ENCODE measurements at regions of chr14 and their contacts with region 1.

Region 1: GRCh38 chr14:34875031-34875922 is at the start of gene BAZ1A:
- DNase-seq: peak; percentile 63
- ATAC-seq: peak; percentile 12
- H3K4me3 Mint-ChIP-seq: peak within 1 kb of the TSS; percentile 100
- H3K27ac Mint-ChIP-seq: peak within 1 kb of the TSS; percentile 99
- H3K4me1 Mint-ChIP-seq: peaks cover 35% of the 10 kb centered on the region
- H3K27me3 Mint-ChIP-seq: no peaks in the 10 kb centered on the region
- CTCF ChIP-seq: no peak
- total RNA-seq, gene BAZ1A: 45.3 and 55.9 TPM in 2 replicates

Region 2: GRCh38 chr14:34461334-34462131 is 413.7 kb before region 1 on chr14:
- CTCF ChIA-PET with region 1: no interaction called
- POLR2A ChIA-PET with region 1: no interaction called
- intact Hi-C with region 1: loop called (anchors 5 kb)
- DNase-seq: no peak
- ATAC-seq: no peak
- H3K4me3 Mint-ChIP-seq: peak overlapping the region; percentile 88
- H3K27ac Mint-ChIP-seq: peak overlapping the region; percentile 76
- H3K4me1 Mint-ChIP-seq: peaks cover 15% of the 10 kb centered on the region
- H3K27me3 Mint-ChIP-seq: no peaks in the 10 kb centered on the region
- CTCF ChIP-seq: no peak

Region 3: GRCh38 chr14:34629657-34630529 is 245.4 kb before region 1 on chr14 and contains the start of gene SNX6:
- CTCF ChIA-PET with region 1: no interaction called
- POLR2A ChIA-PET with region 1: interaction called, 6 read pairs
- intact Hi-C with region 1: loop called (anchors 1 kb)
- DNase-seq: peak; percentile 77
- ATAC-seq: peak; percentile 98
- H3K4me3 Mint-ChIP-seq: peak within 1 kb of the TSS; percentile 97
- H3K27ac Mint-ChIP-seq: peak within 1 kb of the TSS; percentile 93
- H3K4me1 Mint-ChIP-seq: peaks cover 10% of the 10 kb centered on the region
- H3K27me3 Mint-ChIP-seq: peaks cover 3% of the 10 kb centered on the region
- CTCF ChIP-seq: no peak
- total RNA-seq, gene SNX6: 56.0 and 61.0 TPM in 2 replicates

Region 4: DNA sequence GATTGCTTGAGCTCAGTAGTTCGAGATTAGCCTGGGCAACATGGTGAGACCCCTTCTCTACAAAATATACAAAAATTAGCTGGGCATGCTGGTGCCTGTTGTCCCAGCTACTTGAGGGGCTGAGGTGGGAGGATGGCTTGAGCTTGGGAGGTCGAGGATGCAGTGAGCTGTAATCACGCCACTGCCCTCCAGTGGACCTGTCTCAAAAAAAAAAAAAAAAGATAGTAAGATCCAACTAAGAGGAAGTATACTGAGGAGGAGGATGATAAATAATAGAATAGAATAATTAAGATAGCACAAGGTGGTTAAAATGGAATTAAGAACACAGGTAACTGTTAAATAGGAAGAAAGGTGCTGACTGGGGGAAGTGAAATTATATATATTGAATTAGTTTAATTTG is 36.9 kb after region 1 on chr14:
- CTCF ChIA-PET with region 1: no interaction called
- POLR2A ChIA-PET with region 1: interaction called, 4 read pairs
- intact Hi-C with region 1: loop called (anchors 2 kb)
- DNase-seq: no peak
- ATAC-seq: no peak
- H3K4me3 Mint-ChIP-seq: no peak overlapping the region
- H3K27ac Mint-ChIP-seq: no peak overlapping the region
- H3K4me1 Mint-ChIP-seq: peaks cover 12% of the 10 kb centered on the region
- H3K27me3 Mint-ChIP-seq: no peaks in the 10 kb centered on the region
- CTCF ChIP-seq: no peak

Region 5: DNA sequence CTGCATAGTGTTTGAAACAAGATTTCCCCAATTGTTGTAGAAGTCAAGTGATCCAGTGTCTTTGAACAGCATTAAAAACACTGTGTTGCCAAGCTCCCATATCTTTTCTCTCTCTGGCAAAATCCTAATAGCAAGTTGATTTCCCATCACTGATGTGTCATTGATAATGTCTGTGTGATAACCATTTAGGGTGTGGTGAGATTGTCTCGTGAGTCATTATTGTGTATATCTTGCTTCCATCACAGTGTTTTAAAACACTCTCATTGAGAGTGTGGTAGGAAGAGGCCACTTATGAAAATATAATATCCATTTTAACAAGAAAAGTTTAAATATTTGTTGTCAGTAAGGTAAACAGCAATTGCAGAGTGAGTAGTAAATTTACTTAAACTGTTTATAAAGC is 321.7 kb after region 1 on chr14:
- CTCF ChIA-PET with region 1: no interaction called
- POLR2A ChIA-PET with region 1: no interaction called
- intact Hi-C with region 1: no loop called
- DNase-seq: no peak
- ATAC-seq: no peak
- H3K4me3 Mint-ChIP-seq: no peak overlapping the region
- H3K27ac Mint-ChIP-seq: no peak overlapping the region
- H3K4me1 Mint-ChIP-seq: peaks cover 3% of the 10 kb centered on the region
- H3K27me3 Mint-ChIP-seq: no peaks in the 10 kb centered on the region
- CTCF ChIP-seq: no peak

Region 6: GRCh38 chr14:35808076-35808652 is 932.9 kb after region 1 on chr14:
- CTCF ChIA-PET with region 1: no interaction called
- POLR2A ChIA-PET with region 1: no interaction called
- intact Hi-C with region 1: loop called (anchors 2 kb)
- DNase-seq: no peak
- ATAC-seq: no peak
- H3K4me3 Mint-ChIP-seq: peak overlapping the region; percentile 95
- H3K27ac Mint-ChIP-seq: peak overlapping the region; percentile 87
- H3K4me1 Mint-ChIP-seq: peaks cover 31% of the 10 kb centered on the region
- H3K27me3 Mint-ChIP-seq: no peaks in the 10 kb centered on the region
- CTCF ChIP-seq: no peak